ENCODE measurements at regions of chr12 and their contacts with region 1.

Region 1: DNA sequence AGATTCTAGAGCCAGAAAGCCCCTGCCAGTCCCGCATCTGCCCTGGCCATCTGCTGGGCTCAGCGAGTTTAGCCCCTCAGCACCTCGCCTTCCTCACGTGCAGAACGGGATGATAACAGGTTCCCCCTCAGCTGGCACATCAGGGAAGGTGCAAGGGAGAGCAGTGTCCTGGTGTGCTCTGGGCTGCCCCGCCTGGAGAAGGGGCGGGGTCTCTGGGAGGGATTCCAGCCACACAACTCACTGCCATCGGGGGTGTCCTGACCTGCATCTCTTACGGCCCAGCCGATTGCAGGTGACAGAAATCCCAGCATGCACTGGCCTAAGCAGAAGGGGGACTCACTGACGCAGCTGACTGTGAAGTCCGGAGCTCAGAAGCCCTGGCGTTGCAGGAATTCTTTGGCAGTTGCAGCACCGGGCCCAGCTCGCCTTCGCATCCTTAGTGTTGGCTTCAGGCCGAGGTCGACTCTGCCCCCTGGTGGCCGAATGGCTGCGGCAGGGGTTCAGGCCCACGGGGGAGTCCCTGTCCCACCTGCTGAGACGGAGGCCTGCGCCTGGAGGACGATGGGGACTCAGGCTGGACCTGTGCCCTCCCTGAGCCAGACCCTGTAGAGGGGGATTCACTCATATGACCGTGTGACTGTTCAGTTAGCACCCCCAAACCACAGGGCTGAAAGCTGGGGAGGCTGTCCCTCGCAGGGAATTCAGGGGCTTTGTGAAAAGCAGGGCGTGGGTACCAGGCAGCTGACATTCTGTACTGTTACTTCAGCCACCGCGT is 178.6 kb downstream of the ADGRD1 start:
- DNase-seq: peak in 1 of 2 donors; percentile 34
- ATAC-seq: peak in 1 of 2 donors; percentile 57
- H3K4me3 ChIP-seq: no peak overlapping the region
- H3K27ac ChIP-seq: no peak overlapping the region
- H3K4me1 ChIP-seq: peaks cover 5 to 6% of the 10 kb centered on the region in 2 donors
- H3K27me3 ChIP-seq: no peaks in the 10 kb centered on the region
- CTCF ChIP-seq: peak; percentile 41 to 77 (median 64)
- POLR2A ChIP-seq: no peak

Region 2: GRCh38 chr12:130916251-130916911 is 215.9 kb before region 1 on chr12:
- in situ Hi-C with region 1: loop called in 3 of 4 experiments (anchors 10 to 25 kb)
- intact Hi-C with region 1: loop called (anchors 1 kb)
- DNase-seq: peak; percentile 25 to 34
- ATAC-seq: peak; percentile 63 to 74
- H3K4me3 ChIP-seq: peak overlapping the region in 1 of 4 donors; percentile 7
- H3K27ac ChIP-seq: no peak overlapping the region
- H3K4me1 ChIP-seq: peaks cover 0 to 3% of the 10 kb centered on the region in 2 donors
- H3K27me3 ChIP-seq: peaks cover 7 to 20% (median 11%) of the 10 kb centered on the region in 3 donors
- CTCF ChIP-seq: peak; percentile 73 to 91 (median 86)
- POLR2A ChIP-seq: no peak